K562 (cell line): ENCODE measurements at regions of chr1 and their contacts with region 1.

Region 1: DNA sequence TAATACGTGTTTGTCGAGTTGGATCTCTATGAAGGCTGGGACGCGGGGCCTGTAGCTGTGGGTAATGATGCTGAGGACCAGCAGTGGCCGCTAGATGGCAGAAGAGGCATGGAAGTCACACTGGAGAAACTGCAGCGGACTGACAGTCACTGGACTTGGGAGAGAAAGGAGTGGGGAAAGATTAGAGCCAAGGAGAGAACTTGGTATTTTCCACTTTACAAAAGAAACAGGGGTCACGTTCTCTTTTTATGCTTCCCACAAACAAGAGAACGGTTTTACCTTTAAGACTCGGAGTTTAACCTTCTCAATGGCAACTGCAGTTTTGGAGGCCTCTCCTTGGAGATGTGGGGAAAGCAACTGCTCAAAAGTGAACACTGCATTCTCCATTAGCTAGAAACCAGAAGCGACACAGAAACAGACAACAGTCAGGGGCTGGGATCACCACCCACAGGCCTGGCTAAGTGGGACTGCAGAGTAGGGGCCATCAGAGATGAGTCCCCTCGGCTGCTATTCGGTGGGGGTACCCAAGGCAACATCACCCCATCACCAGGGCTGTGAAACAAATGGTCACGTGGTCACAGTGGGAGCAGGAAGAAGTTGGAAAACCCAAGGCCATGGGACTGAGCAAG is 51.1 kb upstream of the EDEM3 start:
- DNase-seq: peak; percentile 85 to 94 (median 88)
- ATAC-seq: peak; percentile 98
- H3K4me3 ChIP-seq: no peak overlapping the region
- H3K27ac ChIP-seq: peak overlapping the region; percentile 36; the same call in 1 of the 3 replicates
- H3K4me1 ChIP-seq: peaks cover 10 to 11% of the 10 kb centered on the region in 2 experiments; a peak in 4 of 5 replicates
- H3K27me3 ChIP-seq: no peaks in the 10 kb centered on the region
- CTCF ChIP-seq: peak; percentile 91 to 98 (median 95)
- EP300 ChIP-seq: no peak
- POLR2A ChIP-seq: no peak
- RAD21 ChIP-seq: peak; percentile 93 to 97

Region 2: DNA sequence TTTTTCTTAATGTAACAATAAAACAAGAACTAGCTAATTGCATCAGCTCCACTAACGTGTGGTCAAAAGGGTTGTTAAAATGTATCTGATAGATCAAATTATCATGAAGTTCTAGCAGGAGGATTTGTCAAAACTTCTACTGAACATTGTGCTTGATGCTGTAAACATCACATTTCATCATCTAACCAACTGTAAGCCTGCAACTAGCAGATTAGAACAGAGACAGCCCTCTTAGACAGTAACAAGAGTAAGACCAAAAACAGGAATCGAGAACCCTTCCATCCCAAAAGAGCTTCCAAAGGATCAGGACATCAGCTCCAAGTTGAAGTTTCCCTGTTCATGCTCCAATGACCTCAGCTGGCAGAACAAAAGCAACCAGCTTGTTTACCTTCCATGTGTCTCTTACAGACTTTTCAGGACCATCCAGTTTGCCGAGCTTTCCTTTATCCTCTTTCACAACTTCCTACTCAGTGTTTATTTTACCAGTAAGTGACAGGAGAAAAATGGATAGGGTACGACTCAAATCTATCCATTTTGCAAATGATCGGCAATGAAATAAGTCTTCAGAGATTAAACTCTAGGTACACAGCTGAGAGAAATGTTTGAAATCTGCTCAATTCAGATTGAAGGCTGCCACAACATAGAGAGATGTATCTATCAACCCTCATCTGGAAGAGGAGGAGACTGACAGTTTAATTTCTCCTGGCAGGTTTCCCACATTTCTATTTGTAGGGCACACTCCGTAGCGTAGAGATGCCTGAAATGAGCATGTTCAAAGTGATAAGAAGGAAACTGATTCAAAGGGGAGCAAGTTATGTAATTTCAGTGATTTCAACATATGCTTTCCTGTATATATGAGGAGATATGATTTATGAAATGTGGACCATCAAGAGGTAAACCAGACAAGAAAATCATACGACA is 124.2 kb after region 1 on chr1:
- CTCF ChIA-PET with region 1: no interaction called
- POLR2A ChIA-PET with region 1: no interaction called
- in situ Hi-C with region 1: no loop called
- intact Hi-C with region 1: loop called (anchors 5 kb)
- DNase-seq: peak in 1 of 4 experiments; percentile 29
- ATAC-seq: peak; percentile 85
- H3K4me3 ChIP-seq: no peak overlapping the region
- H3K27ac ChIP-seq: peak overlapping the region; percentile 10; the same call in 2 of the 3 replicates
- H3K4me1 ChIP-seq: peaks cover 0 to 10% of the 10 kb centered on the region in 2 experiments; a peak in 2 of 5 replicates
- H3K27me3 ChIP-seq: no peaks in the 10 kb centered on the region
- CTCF ChIP-seq: no peak
- EP300 ChIP-seq: peak; percentile 91
- POLR2A ChIP-seq: no peak
- RAD21 ChIP-seq: no peak; a peak in 1 of 4 replicates

Region 3: DNA sequence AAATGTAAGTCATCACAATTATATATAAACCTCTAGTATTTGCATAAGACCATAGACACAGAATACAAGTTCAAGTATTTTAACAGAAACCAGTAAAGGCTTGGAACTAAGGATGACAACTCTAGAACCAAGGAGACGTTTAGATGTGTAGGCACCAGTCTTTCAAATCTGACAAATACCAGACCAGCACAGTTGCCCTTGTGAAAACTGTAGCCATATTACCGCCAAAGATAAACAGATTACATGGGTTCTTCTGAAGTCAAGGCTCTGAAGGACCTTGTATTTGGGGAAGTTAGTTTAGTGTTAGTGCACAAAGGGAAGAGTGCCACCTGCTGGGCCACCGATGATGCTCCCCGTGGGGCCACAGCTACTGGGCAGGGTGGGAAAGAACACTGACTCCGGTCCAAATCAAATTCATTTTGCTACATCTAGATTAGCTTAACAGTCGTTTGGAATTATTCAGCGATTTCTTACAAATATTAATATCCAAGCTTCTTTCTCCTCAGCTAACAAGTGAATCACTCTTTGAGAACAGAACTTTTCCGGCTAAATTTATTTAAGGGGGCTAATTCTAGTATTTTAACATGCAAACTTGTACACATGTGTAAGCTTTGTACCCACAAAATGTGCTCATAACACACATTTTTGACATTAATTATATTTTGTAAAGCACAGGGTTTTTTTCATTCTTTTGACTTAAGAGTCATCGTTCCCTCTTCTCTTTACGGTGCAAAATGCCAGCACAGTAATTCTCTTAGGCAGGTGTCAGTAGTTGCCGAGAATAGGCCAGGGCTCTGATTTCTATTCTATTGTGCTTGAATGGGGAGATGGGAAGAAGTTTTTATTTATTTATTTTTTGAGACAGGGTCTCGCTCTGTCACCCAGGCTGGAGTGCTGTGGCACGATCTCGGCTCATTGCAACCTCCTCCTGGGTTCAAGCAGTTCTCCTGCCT is 176.5 kb after region 1 on chr1:
- CTCF ChIA-PET with region 1: interaction called, 62 read pairs
- POLR2A ChIA-PET with region 1: interaction called, 3 read pairs
- in situ Hi-C with region 1: loop called (anchors 5 kb)
- intact Hi-C with region 1: loop called (anchors 1 kb)
- DNase-seq: peak; percentile 63 to 88 (median 74)
- ATAC-seq: peak; percentile 100
- H3K4me3 ChIP-seq: no peak overlapping the region
- H3K27ac ChIP-seq: no peak overlapping the region
- H3K4me1 ChIP-seq: peaks cover 0 to 2% of the 10 kb centered on the region in 2 experiments; a peak in 2 of 5 replicates
- H3K27me3 ChIP-seq: peaks cover 0 to 2% of the 10 kb centered on the region in 2 experiments; a peak in 1 of 5 replicates
- CTCF ChIP-seq: peak; percentile 91 to 98 (median 98)
- EP300 ChIP-seq: peak; percentile 60; the same call in 1 of the 2 replicates
- POLR2A ChIP-seq: no peak
- RAD21 ChIP-seq: peak; percentile 98 to 99

Region 4: DNA sequence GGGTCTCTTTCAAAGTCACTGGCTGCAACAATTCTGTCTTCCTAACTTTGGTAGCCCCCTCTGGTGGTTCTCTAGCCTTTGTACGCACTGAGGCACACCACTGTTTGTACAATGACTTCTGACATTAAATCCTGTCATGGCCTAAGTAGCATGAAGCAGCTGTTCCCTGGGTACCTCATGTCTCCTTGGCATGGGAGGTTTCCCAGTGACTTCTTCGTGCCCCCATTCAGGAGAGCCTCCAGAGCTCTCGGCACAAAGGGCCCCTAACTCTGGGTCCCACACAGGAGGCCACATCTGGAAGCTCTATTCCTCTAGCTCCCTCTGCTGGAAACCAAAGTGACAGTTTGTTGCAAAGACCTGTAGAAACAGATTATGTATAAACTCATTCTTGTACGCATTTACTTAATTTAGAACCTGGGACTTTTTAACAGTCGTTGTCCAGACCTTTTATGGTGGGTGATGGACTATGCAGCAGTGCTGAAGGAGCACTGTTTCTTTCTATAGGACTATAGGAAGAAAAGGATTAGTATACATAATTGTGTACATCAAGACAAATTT is 364.6 kb after region 1 on chr1:
- CTCF ChIA-PET with region 1: interaction called, 15 read pairs
- POLR2A ChIA-PET with region 1: no interaction called
- in situ Hi-C with region 1: loop called (anchors 5 kb)
- intact Hi-C with region 1: loop called (anchors 1 kb)
- DNase-seq: peak; percentile 54 to 86 (median 68)
- ATAC-seq: peak; percentile 98
- H3K4me3 ChIP-seq: no peak overlapping the region; the same call in 1 of the 2 replicates
- H3K27ac ChIP-seq: peak overlapping the region; percentile 28; the same call in 2 of the 3 replicates
- H3K4me1 ChIP-seq: no peaks in the 10 kb centered on the region; a peak in 1 of 5 replicates
- H3K27me3 ChIP-seq: no peaks in the 10 kb centered on the region
- CTCF ChIP-seq: peak; percentile 82 to 97 (median 82)
- EP300 ChIP-seq: no peak
- POLR2A ChIP-seq: no peak
- RAD21 ChIP-seq: peak; percentile 86 to 95

Region 5: DNA sequence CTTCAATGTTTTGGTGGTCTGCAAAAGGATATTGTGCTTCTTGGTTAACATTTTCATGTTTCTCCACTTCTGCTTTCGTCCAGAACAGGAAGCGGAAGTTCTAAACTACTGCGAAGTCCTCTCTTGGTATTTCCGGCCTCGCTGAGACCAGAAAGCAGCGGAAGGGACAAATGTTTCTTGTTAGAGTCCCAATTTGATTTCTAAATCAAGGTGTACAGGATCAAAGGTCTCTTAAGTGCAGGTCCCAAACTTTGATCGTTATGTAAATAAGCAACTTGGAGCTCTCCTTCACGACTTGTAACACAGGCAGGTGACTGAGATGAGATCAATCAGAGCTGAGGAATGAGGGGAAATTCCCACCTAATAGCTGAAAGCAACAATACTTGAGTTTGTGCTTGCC is 888.3 kb after region 1 on chr1:
- CTCF ChIA-PET with region 1: interaction called, 4 read pairs
- POLR2A ChIA-PET with region 1: no interaction called
- in situ Hi-C with region 1: loop called (anchors 10 kb)
- intact Hi-C with region 1: no loop called
- DNase-seq: no peak
- ATAC-seq: peak; percentile 37; the same call in 1 of the 3 replicates
- H3K4me3 ChIP-seq: no peak overlapping the region; the same call in 1 of the 2 replicates
- H3K27ac ChIP-seq: no peak overlapping the region
- H3K4me1 ChIP-seq: no peaks in the 10 kb centered on the region
- H3K27me3 ChIP-seq: no peaks in the 10 kb centered on the region
- CTCF ChIP-seq: no peak
- EP300 ChIP-seq: no peak
- POLR2A ChIP-seq: no peak
- RAD21 ChIP-seq: no peak